ENCODE measurements at regions of chr1 and their contacts with region 1.

Region 1: GRCh38 chr1:55375617-55376258 is 160.6 kb upstream of the USP24 start:
- DNase-seq: peak; percentile 41
- H3K4me3 ChIP-seq: no peak overlapping the region
- H3K27ac ChIP-seq: no peak overlapping the region
- H3K4me1 ChIP-seq: no peaks in the 10 kb centered on the region
- H3K27me3 ChIP-seq: no peaks in the 10 kb centered on the region
- CTCF ChIP-seq: peak; percentile 87 to 96
- POLR2A ChIP-seq: no peak

Region 2: GRCh38 chr1:55179177-55179835 is 196.4 kb before region 1 on chr1:
- CTCF ChIA-PET with region 1: no interaction called
- POLR2A ChIA-PET with region 1: no interaction called
- dilution Hi-C with region 1: no loop called
- intact Hi-C with region 1: no loop called
- DNase-seq: no peak
- H3K4me3 ChIP-seq: no peak overlapping the region
- H3K27ac ChIP-seq: no peak overlapping the region
- H3K4me1 ChIP-seq: no peaks in the 10 kb centered on the region
- H3K27me3 ChIP-seq: no peaks in the 10 kb centered on the region
- CTCF ChIP-seq: no peak
- POLR2A ChIP-seq: no peak

Region 3: DNA sequence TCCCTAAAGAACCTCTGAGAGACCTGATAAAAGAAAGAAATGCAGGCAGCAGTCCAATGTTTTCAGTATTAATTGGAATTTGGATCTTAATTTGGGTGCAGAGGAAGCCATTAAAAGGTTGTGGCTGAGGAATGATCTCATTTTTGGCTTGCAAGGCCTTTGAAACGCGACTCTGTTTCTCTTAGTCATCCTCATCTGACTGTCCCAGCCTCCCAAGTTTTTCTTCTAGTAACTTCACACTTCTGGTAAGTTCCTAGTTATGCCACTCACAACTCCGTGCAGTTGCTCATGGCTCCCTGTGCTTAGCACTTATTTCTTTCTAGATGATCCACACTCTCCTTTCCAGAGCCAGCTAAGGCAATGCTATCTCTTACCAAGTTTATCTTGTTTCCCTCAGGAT is 13.2 kb before region 1 on chr1:
- CTCF ChIA-PET with region 1: interaction called, 25 read pairs
- POLR2A ChIA-PET with region 1: no interaction called
- dilution Hi-C with region 1: no loop called
- intact Hi-C with region 1: no loop called
- DNase-seq: peak; percentile 56
- H3K4me3 ChIP-seq: no peak overlapping the region
- H3K27ac ChIP-seq: no peak overlapping the region
- H3K4me1 ChIP-seq: peaks cover 7% of the 10 kb centered on the region
- H3K27me3 ChIP-seq: no peaks in the 10 kb centered on the region
- CTCF ChIP-seq: no peak
- POLR2A ChIP-seq: no peak

Region 4: DNA sequence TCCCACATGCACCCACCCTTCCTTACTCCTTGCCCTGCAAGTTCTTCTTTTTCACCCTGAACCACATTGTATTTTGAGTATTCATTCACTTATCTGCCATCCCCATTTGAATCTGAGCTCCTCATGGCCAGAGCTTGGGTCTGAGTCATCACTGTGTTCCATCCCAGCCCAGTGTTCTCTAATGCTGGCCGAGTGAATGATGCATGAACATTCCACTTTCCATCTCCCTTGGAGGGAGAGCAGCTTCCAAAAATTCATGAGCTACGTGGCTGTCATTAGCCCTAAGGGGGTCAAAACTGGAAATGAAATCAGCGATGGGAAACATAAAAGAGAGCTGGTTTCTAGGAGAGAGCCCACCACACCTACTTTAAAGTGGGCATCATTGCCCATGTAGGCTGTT is 26.4 kb after region 1 on chr1:
- CTCF ChIA-PET with region 1: interaction called, 16 read pairs
- POLR2A ChIA-PET with region 1: no interaction called
- dilution Hi-C with region 1: no loop called
- intact Hi-C with region 1: no loop called
- DNase-seq: no peak
- H3K4me3 ChIP-seq: no peak overlapping the region
- H3K27ac ChIP-seq: no peak overlapping the region
- H3K4me1 ChIP-seq: no peaks in the 10 kb centered on the region
- H3K27me3 ChIP-seq: no peaks in the 10 kb centered on the region
- CTCF ChIP-seq: no peak
- POLR2A ChIP-seq: no peak

Region 5: GRCh38 chr1:55640708-55641473 is 265.2 kb after region 1 on chr1:
- CTCF ChIA-PET with region 1: interaction called, 17 read pairs
- POLR2A ChIA-PET with region 1: no interaction called
- dilution Hi-C with region 1: no loop called
- intact Hi-C with region 1: no loop called
- DNase-seq: peak; percentile 78
- H3K4me3 ChIP-seq: peak overlapping the region; percentile 7 to 63 (median 16)
- H3K27ac ChIP-seq: no peak overlapping the region
- H3K4me1 ChIP-seq: peaks cover 7% of the 10 kb centered on the region
- H3K27me3 ChIP-seq: no peaks in the 10 kb centered on the region
- CTCF ChIP-seq: no peak
- POLR2A ChIP-seq: no peak

Region 6: DNA sequence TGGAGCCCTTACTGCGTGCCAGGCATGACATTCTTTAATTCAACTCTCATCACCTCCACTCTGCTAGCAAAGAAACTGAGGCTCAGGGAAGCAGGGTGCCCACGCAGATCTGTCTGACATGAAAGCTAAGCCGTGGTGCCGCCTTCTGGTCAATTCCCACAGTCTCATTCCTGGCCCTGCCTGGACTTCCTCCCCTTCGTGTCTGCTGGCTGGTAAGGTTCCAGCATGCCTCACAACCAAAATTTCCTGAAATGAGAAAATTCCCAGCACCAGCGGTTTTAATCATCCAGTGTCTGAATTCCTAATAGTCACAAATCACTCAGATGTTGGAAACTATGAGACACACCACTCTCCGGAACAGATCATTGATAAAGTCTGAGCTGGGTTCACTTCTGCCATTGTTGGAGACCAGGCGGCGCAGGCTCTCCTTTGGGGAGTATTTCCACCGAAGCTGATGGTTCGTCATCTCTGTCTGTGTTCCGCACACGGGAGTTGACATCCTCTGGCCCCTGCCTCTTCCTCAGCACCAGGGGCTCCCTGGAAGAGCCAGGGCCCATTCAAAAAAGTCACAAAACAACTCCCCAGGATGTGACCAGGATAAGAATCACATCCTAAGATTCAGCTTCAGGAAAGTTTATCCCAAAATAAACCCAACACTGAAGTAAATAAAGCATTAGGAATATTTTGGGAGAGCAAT is 1035.9 kb after region 1 on chr1:
- CTCF ChIA-PET with region 1: interaction called, 4 read pairs
- POLR2A ChIA-PET with region 1: no interaction called
- dilution Hi-C with region 1: no loop called
- intact Hi-C with region 1: loop called (anchors 5 kb)
- DNase-seq: peak; percentile 95
- H3K4me3 ChIP-seq: no peak overlapping the region
- H3K27ac ChIP-seq: peak overlapping the region; percentile 49
- H3K4me1 ChIP-seq: peaks cover 19% of the 10 kb centered on the region
- H3K27me3 ChIP-seq: no peaks in the 10 kb centered on the region
- CTCF ChIP-seq: peak; percentile 38 to 60
- POLR2A ChIP-seq: no peak

Measured in endothelial cell of umbilical vein (primary cell).